Naive thymus-derived CD4-positive, alpha-beta T cell (primary cell): ENCODE measurements at regions of chr2 and their contacts with region 1.

Region 1: GRCh38 chr2:232438951-232439757 is 16.8 kb upstream of the ALPI start:
- DNase-seq: peak in 5 of 9 donors; percentile 20 to 54 (median 28)
- ATAC-seq: peak; percentile 52
- H3K4me3 ChIP-seq: no peak overlapping the region
- H3K4me3 Mint-ChIP-seq: no peak overlapping the region
- H3K27ac ChIP-seq: no peak overlapping the region
- H3K27ac Mint-ChIP-seq: no peak overlapping the region
- H3K4me1 ChIP-seq: no peaks in the 10 kb centered on the region
- H3K4me1 Mint-ChIP-seq: peaks cover 0 to 8% (median 3%) of the 10 kb centered on the region in 7 donors
- H3K27me3 ChIP-seq: no peaks in the 10 kb centered on the region
- H3K27me3 Mint-ChIP-seq: peaks cover 0 to 5% (median 0%) of the 10 kb centered on the region in 5 donors

Region 2: GRCh38 chr2:232339121-232340081 is 99.8 kb before region 1 on chr2:
- CTCF ChIA-PET with region 1: no interaction called
- POLR2A ChIA-PET with region 1: no interaction called
- intact Hi-C with region 1: loop called (anchors 1 to 5 kb)
- DNase-seq: no peak
- ATAC-seq: no peak
- H3K4me3 ChIP-seq: no peak overlapping the region
- H3K4me3 Mint-ChIP-seq: peak overlapping the region in 1 of 10 donors; percentile 23
- H3K27ac ChIP-seq: no peak overlapping the region
- H3K27ac Mint-ChIP-seq: peak overlapping the region in 4 of 9 donors; percentile 7 to 54 (median 50)
- H3K4me1 ChIP-seq: no peaks in the 10 kb centered on the region
- H3K4me1 Mint-ChIP-seq: peaks cover 0 to 20% (median 6%) of the 10 kb centered on the region in 7 donors
- H3K27me3 ChIP-seq: no peaks in the 10 kb centered on the region
- H3K27me3 Mint-ChIP-seq: peaks cover 0 to 4% (median 0%) of the 10 kb centered on the region in 5 donors

Region 3: GRCh38 chr2:232458661-232459418 is 19.7 kb after region 1 on chr2:
- CTCF ChIA-PET with region 1: no interaction called
- POLR2A ChIA-PET with region 1: no interaction called
- intact Hi-C with region 1: no loop called
- DNase-seq: no peak
- ATAC-seq: no peak
- H3K4me3 ChIP-seq: no peak overlapping the region
- H3K4me3 Mint-ChIP-seq: no peak overlapping the region
- H3K27ac ChIP-seq: no peak overlapping the region
- H3K27ac Mint-ChIP-seq: no peak overlapping the region
- H3K4me1 ChIP-seq: no peaks in the 10 kb centered on the region
- H3K4me1 Mint-ChIP-seq: peaks cover 0 to 2% (median 0%) of the 10 kb centered on the region in 7 donors
- H3K27me3 ChIP-seq: no peaks in the 10 kb centered on the region
- H3K27me3 Mint-ChIP-seq: peaks cover 3 to 34% (median 12%) of the 10 kb centered on the region in 5 donors